Activated CD4-positive, alpha-beta memory T cell treated with anti-CD3 and anti-CD28 coated beads for 36 hours (primary cell): ENCODE measurements at regions of chr1 and their contacts with region 1.

Region 1: GRCh38 chr1:201254625-201255506 is 28.4 kb upstream of the PKP1 start:
- DNase-seq: peak; percentile 73
- H3K4me3 Mint-ChIP-seq: no peak overlapping the region
- H3K27ac Mint-ChIP-seq: no peak overlapping the region
- H3K4me1 Mint-ChIP-seq: no peaks in the 10 kb centered on the region
- H3K27me3 Mint-ChIP-seq: no peaks in the 10 kb centered on the region

Region 2: GRCh38 chr1:201361652-201362504 is 107.0 kb after region 1 on chr1:
- CTCF ChIA-PET with region 1: interaction called, 36 read pairs
- POLR2A ChIA-PET with region 1: no interaction called
- intact Hi-C with region 1: loop called (anchors 1 kb)
- DNase-seq: peak; percentile 43
- H3K4me3 Mint-ChIP-seq: no peak overlapping the region
- H3K27ac Mint-ChIP-seq: no peak overlapping the region
- H3K4me1 Mint-ChIP-seq: no peaks in the 10 kb centered on the region
- H3K27me3 Mint-ChIP-seq: peaks cover 4% of the 10 kb centered on the region

Region 3: DNA sequence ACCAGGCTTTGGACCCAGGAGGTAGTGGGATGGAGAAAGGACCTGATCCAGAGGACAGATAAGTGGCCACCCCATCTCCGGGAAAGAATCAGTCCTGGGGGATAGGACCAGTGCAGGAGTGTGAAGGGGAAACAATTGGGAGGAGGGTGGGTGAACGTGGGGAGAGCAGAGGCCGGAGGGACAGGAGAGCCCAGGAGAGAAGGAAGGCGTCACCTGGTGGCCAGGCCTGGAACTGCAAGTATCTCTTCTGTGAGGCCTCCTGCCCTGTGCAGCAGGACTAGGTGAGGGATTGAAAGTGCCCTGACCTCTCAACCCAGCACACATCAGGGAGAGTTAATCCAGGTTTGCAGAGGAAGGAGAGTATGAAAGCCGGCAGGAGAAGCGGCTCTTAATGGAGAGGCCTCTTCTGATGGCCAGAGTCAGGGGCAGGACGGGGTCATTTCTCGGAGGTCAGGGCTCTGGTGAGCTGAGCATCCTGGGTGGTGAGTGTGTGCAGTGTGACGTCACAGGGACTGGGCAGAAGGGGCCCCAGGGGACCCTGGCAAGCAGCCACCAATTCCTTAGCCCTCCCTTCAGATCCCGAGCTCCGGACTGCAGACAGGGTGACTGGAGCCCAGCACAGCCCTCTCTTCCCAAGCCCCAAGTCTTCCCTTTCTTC is 153.4 kb after region 1 on chr1:
- CTCF ChIA-PET with region 1: interaction called, 7 read pairs
- POLR2A ChIA-PET with region 1: no interaction called
- intact Hi-C with region 1: loop called (anchors 5 kb)
- DNase-seq: peak; percentile 83
- H3K4me3 Mint-ChIP-seq: no peak overlapping the region
- H3K27ac Mint-ChIP-seq: no peak overlapping the region
- H3K4me1 Mint-ChIP-seq: no peaks in the 10 kb centered on the region
- H3K27me3 Mint-ChIP-seq: no peaks in the 10 kb centered on the region